ENCODE measurements at regions of chr2 and their contacts with region 1.

Region 1: DNA sequence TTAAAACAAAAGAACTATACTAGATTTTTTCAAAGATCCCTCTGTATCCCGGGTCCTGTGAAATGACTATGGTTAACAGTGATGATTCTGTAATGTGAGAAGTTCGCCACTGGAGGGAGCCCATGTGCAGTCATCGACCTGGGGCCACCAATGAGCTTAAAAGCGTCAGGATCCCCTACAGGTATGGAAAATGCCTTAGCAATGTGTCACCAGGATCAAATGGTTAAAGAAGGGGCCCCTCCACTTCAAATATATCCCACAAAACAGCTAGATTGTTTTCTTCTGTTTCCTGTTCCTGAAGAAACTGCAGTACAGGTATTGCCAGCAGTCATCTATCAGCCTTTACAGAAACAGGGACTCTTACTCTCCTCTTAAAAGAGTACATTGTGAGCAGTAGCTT is 15.3 kb downstream of the CHRNA1 start:
- DNase-seq: peak; percentile 87 to 91
- H3K4me3 ChIP-seq: no peak overlapping the region
- H3K27ac ChIP-seq: no peak overlapping the region
- H3K4me1 ChIP-seq: peaks cover 8% of the 10 kb centered on the region
- H3K27me3 ChIP-seq: no peaks in the 10 kb centered on the region
- CTCF ChIP-seq: peak; percentile 97

Region 2: GRCh38 chr2:174623690-174624089 is 125.3 kb before region 1 on chr2:
- CTCF ChIA-PET with region 1: no interaction called
- POLR2A ChIA-PET with region 1: no interaction called
- intact Hi-C with region 1: no loop called
- DNase-seq: no peak
- H3K4me3 ChIP-seq: no peak overlapping the region
- H3K27ac ChIP-seq: no peak overlapping the region
- H3K4me1 ChIP-seq: no peaks in the 10 kb centered on the region
- H3K27me3 ChIP-seq: no peaks in the 10 kb centered on the region
- CTCF ChIP-seq: no peak

Region 3: DNA sequence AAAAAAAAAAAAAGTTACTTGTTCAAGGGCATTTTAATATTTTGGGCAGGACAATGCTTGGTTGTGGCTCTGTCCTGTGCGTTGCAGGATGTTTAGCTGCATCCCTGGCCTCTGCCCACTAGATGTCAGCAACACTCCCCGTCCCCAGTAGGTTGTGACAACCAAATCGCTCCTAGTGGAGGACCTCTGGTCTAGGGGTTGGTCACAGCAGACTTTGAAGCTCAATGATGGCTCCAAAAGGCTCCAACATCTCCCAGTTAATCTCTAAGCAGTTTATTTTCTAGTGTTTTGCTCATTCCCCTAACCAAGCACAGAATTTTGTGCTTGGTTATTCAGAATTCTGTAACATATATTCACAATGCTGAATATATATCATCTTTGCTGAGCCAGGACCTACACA is 51.7 kb before region 1 on chr2:
- CTCF ChIA-PET with region 1: interaction called, 5 read pairs
- POLR2A ChIA-PET with region 1: interaction called, 5 read pairs
- intact Hi-C with region 1: loop called (anchors 5 kb)
- DNase-seq: peak in 1 of 2 experiments; percentile 59
- H3K4me3 ChIP-seq: no peak overlapping the region
- H3K27ac ChIP-seq: no peak overlapping the region
- H3K4me1 ChIP-seq: no peaks in the 10 kb centered on the region
- H3K27me3 ChIP-seq: no peaks in the 10 kb centered on the region
- CTCF ChIP-seq: peak; percentile 84

Region 4: DNA sequence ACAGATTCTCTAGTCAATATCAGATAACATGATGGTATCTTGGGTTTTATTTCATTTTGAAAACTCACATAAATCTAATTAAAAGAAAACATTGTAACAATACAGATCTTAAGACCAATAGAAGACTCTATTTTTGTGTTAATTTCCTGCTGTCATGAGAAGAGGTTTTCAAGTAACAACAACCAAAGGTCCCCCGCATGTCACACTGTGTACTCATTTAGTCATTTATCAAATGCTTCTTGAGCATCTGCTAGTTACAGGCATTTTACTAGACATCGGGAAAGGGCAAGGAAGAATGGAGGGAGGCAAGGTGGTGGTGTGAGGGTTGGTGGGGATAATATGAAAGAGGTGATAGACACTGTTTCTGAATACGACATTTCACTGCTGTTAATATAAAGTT is 93.0 kb after region 1 on chr2:
- CTCF ChIA-PET with region 1: no interaction called
- POLR2A ChIA-PET with region 1: no interaction called
- intact Hi-C with region 1: no loop called
- DNase-seq: no peak
- H3K4me3 ChIP-seq: no peak overlapping the region
- H3K27ac ChIP-seq: no peak overlapping the region
- H3K4me1 ChIP-seq: peaks cover 5% of the 10 kb centered on the region
- H3K27me3 ChIP-seq: no peaks in the 10 kb centered on the region
- CTCF ChIP-seq: no peak

Region 5: DNA sequence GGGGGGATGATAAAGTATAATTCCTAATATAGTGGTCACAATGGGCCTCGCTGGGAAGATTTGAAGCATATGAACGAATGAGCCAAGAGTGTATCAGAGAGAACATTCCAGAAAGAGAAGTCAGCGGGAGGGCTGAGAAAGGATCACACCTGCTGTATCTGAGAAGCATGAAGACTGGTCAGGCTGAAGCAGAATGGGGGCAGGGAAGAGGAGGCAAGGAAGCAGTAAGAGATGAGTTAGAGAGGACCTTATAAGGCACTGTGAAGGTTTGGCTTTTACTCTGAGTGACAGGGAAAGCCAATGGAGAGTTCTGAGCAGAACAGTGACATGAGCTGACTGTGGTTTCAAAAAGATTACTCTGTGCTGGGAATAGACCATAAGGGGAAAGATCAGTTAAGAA is 182.8 kb after region 1 on chr2:
- CTCF ChIA-PET with region 1: no interaction called
- POLR2A ChIA-PET with region 1: no interaction called
- intact Hi-C with region 1: no loop called
- DNase-seq: no peak
- H3K4me3 ChIP-seq: no peak overlapping the region
- H3K27ac ChIP-seq: no peak overlapping the region
- H3K4me1 ChIP-seq: no peaks in the 10 kb centered on the region
- H3K27me3 ChIP-seq: no peaks in the 10 kb centered on the region
- CTCF ChIP-seq: no peak

Region 6: DNA sequence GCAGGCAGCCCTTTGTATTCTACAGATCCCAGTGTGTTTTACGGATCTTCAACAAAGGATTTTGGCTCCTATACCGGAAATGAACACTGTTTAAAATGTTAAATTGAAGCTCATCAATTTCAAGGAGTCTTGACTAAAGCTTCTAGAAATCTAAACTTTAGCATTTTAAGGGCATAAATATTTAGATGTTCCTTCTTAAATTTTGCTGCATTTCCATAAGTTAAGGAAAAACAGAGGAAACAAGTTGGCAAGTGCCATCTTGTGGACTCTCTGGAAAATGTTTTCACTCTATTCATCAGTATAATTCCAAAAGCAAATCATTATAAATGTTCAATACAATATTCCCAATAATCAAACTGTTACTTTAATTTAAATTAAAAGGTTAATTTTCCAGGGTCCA is 236.7 kb after region 1 on chr2:
- CTCF ChIA-PET with region 1: interaction called, 8 read pairs
- POLR2A ChIA-PET with region 1: interaction called, 4 read pairs
- intact Hi-C with region 1: loop called (anchors 1 kb)
- DNase-seq: no peak
- H3K4me3 ChIP-seq: no peak overlapping the region
- H3K27ac ChIP-seq: no peak overlapping the region
- H3K4me1 ChIP-seq: no peaks in the 10 kb centered on the region
- H3K27me3 ChIP-seq: no peaks in the 10 kb centered on the region
- CTCF ChIP-seq: peak; percentile 88

Region 7: GRCh38 chr2:175111200-175111657 is 362.3 kb after region 1 on chr2:
- CTCF ChIA-PET with region 1: interaction called, 3 read pairs
- POLR2A ChIA-PET with region 1: no interaction called
- intact Hi-C with region 1: loop called (anchors 1 kb)
- DNase-seq: peak in 1 of 2 experiments; percentile 59
- H3K4me3 ChIP-seq: no peak overlapping the region
- H3K27ac ChIP-seq: no peak overlapping the region
- H3K4me1 ChIP-seq: no peaks in the 10 kb centered on the region
- H3K27me3 ChIP-seq: no peaks in the 10 kb centered on the region
- CTCF ChIP-seq: peak; percentile 98

Region 8: GRCh38 chr2:175175896-175176295 is 426.9 kb after region 1 on chr2:
- CTCF ChIA-PET with region 1: interaction called, 17 read pairs
- POLR2A ChIA-PET with region 1: no interaction called
- intact Hi-C with region 1: no loop called
- DNase-seq: peak in 1 of 2 experiments; percentile 70
- H3K4me3 ChIP-seq: no peak overlapping the region
- H3K27ac ChIP-seq: peak overlapping the region; percentile 46
- H3K4me1 ChIP-seq: peaks cover 45% of the 10 kb centered on the region
- H3K27me3 ChIP-seq: no peaks in the 10 kb centered on the region
- CTCF ChIP-seq: no peak

Region 9: GRCh38 chr2:176063958-176064357 is 1315.0 kb after region 1 on chr2:
- CTCF ChIA-PET with region 1: no interaction called
- POLR2A ChIA-PET with region 1: no interaction called
- intact Hi-C with region 1: no loop called
- DNase-seq: no peak
- H3K4me3 ChIP-seq: no peak overlapping the region
- H3K27ac ChIP-seq: no peak overlapping the region
- H3K4me1 ChIP-seq: no peaks in the 10 kb centered on the region
- H3K27me3 ChIP-seq: 0 out of 2 replicates have a peak, but pooled peaks cover 13% of the 10 kb centered on the region
- CTCF ChIP-seq: no peak

Region 10: DNA sequence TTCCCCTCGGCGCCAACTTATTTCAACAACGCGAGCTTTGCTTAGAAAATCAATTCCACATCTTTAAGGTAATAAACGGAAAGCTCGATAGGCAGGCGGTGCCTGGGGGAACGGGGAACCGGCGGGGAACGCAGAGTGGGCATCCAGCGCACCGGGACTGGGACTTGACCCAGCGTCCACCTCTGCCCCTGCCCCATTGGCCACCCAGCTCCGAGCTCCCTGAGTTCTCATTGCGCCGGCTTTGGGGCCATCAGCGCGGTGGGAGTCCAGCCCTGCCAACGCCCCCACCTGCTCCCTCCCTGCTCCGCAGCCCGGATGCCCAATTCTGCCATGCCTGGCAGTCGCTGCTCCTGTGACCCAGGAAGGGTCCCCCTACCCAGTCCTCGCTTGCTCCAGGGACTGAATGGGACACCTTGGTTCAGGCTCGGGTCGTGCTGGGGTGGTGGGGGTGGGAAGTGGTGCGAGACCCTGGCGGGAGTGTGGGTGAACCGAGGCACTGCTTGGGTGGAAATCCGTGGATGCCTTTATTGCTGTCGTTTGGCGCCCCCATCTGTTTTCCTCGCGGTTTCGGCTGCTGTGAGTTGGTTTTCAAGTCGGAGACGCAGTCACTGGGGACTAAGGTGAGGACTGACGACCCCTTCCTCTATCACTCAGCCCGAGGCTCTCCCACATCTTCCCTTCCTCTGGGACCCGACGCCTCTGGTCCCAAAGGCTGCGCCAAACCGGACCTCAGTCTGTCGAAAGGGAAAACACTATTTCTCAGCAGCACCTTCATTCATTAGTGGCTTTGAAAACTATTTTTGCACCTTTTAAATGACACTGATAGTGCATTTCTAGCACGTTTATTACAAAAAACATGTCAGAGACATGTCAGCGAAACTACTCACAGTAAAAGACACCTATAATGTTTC is 1337.2 kb after region 1 on chr2:
- CTCF ChIA-PET with region 1: no interaction called
- POLR2A ChIA-PET with region 1: no interaction called
- intact Hi-C with region 1: loop called (anchors 2 kb)
- DNase-seq: peak in 1 of 2 experiments; percentile 30
- H3K4me3 ChIP-seq: no peak overlapping the region
- H3K27ac ChIP-seq: no peak overlapping the region
- H3K4me1 ChIP-seq: no peaks in the 10 kb centered on the region
- H3K27me3 ChIP-seq: peaks cover 65% of the 10 kb centered on the region
- CTCF ChIP-seq: peak; percentile 62